CD4-positive, alpha-beta T cell (primary cell): ENCODE measurements at regions of chr16 and their contacts with region 1.

Region 1: DNA sequence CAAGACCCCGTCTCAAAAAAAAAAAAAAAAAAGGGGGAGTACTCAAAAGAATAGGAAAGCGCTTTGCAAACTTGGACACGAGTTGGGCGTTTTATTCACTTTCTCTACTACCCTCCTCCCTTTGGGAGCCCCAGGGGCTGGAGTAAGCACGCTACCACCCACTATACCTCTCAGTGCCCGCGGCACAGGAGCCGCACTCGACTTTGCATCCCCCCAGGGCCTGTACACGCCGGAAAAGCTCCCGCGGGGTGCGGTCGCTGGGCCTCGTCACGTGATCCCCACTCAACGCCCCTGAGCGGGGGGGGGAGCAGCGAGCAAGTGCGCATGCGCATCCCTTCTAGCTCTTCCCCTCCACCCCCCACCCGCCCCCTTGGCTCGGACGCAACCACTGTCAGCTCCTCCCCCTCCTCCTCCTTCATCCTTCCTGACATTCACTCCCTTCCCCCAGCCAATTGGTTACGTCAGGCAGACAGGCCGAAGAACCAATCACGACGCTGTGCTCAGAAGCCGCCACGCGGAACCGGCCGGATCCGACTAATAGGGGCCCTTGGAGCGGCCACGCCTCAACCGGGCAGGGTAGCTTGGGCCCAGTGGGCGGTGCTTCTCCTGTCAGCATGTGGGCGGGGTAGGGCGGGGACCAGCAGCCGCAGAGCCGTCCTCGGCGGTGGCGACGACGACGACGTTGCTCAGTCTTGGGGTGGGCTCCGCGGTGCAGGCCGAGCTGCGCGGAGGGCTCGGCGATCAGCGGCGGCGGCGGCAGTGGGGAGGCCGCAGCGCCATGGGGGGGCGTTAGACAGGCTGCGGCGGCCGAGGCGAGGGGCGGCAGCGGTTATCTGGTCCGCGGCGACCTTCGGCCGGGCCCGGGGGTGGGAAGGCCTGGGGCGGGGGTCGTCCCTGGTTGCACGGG is at the start of gene HAPSTR1:
- DNase-seq: peak; percentile 98 to 100 (median 99)
- ATAC-seq: peak; percentile 87
- H3K4me3 ChIP-seq: peak within 1 kb of the TSS; percentile 89
- H3K4me3 Mint-ChIP-seq: peak within 1 kb of the TSS; percentile 96
- H3K27ac ChIP-seq: peak within 1 kb of the TSS; percentile 86 to 90
- H3K27ac Mint-ChIP-seq: peak within 1 kb of the TSS; percentile 97
- H3K4me1 ChIP-seq: peaks cover 22% of the 10 kb centered on the region
- H3K4me1 Mint-ChIP-seq: peaks cover 47% of the 10 kb centered on the region
- H3K27me3 ChIP-seq: no peaks in the 10 kb centered on the region
- H3K27me3 Mint-ChIP-seq: no peaks in the 10 kb centered on the region
- CTCF ChIP-seq: no peak
- total RNA-seq, gene HAPSTR1: 152 to 153 TPM

Region 2: DNA sequence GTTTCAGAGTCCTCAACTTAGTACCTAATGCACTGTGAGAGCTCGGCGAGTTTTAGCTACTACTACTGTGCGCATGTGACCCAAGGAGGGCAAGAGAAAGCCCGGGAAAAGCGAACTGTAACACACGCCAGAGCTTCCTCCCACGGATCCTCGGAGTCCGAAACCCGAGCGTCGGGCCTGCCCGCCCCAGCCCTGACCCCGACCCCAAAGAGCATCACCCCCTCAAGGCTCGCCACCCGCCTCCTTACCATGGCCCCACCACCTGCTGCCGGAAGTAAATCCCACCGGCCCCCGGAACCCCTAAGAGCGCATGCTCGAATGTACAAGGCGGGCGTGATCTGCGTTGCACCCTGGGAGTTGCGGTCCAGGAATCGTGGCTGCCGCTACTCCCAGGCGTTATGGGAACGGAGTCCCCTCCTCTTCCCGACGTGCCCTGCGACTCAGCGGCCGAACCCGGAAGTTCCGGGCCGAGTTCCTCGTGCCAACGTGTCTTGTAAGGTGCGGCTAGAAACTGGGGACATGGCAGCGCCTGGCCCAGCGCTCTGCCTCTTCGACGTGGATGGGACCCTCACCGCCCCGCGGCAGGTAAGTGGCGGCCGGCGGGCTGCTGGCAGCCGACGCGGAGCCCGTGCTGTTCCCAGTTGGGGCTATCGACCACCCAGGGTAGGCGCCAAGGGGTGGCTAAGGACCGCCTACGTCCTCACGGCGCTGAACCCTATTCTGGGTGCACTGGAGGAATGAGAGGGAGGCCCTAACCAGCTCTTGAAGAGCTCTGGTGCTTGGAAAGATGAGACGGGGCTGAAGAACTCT is 293.6 kb before region 1 on chr16 and contains the starts of genes PMM2 and TMEM186:
- CTCF ChIA-PET with region 1: no interaction called
- POLR2A ChIA-PET with region 1: interaction called, 12 read pairs
- intact Hi-C with region 1: loop called (anchors 5 kb)
- DNase-seq: peak; percentile 87 to 98 (median 93)
- ATAC-seq: peak; percentile 96
- H3K4me3 ChIP-seq: peak within 1 kb of the TSS; percentile 98
- H3K4me3 Mint-ChIP-seq: peak within 1 kb of the TSS; percentile 98
- H3K27ac ChIP-seq: peak within 1 kb of the TSS; percentile 82 to 83
- H3K27ac Mint-ChIP-seq: peak within 1 kb of the TSS; percentile 89
- H3K4me1 ChIP-seq: peaks cover 39% of the 10 kb centered on the region
- H3K4me1 Mint-ChIP-seq: peaks cover 48% of the 10 kb centered on the region
- H3K27me3 ChIP-seq: no peaks in the 10 kb centered on the region
- H3K27me3 Mint-ChIP-seq: no peaks in the 10 kb centered on the region
- CTCF ChIP-seq: no peak
- total RNA-seq, gene PMM2: 24.2 to 27.0 TPM
- total RNA-seq, gene TMEM186: 1.9 to 3.1 TPM

Region 3: GRCh38 chr16:8963825-8964441 is 127.3 kb before region 1 on chr16 and contains the start of gene USP7:
- CTCF ChIA-PET with region 1: interaction called, 3 read pairs
- POLR2A ChIA-PET with region 1: interaction called, 41 read pairs
- intact Hi-C with region 1: loop called (anchors 1 to 5 kb)
- DNase-seq: peak; percentile 85 to 97 (median 91)
- ATAC-seq: peak; percentile 88
- H3K4me3 ChIP-seq: peak within 1 kb of the TSS; percentile 75
- H3K4me3 Mint-ChIP-seq: peak within 1 kb of the TSS; percentile 97
- H3K27ac ChIP-seq: peak within 1 kb of the TSS; percentile 64 to 81
- H3K27ac Mint-ChIP-seq: peak within 1 kb of the TSS; percentile 94
- H3K4me1 ChIP-seq: peaks cover 42% of the 10 kb centered on the region
- H3K4me1 Mint-ChIP-seq: peaks cover 47% of the 10 kb centered on the region
- H3K27me3 ChIP-seq: no peaks in the 10 kb centered on the region
- H3K27me3 Mint-ChIP-seq: no peaks in the 10 kb centered on the region
- CTCF ChIP-seq: no peak
- total RNA-seq, gene USP7: 259 to 268 TPM

Region 4: DNA sequence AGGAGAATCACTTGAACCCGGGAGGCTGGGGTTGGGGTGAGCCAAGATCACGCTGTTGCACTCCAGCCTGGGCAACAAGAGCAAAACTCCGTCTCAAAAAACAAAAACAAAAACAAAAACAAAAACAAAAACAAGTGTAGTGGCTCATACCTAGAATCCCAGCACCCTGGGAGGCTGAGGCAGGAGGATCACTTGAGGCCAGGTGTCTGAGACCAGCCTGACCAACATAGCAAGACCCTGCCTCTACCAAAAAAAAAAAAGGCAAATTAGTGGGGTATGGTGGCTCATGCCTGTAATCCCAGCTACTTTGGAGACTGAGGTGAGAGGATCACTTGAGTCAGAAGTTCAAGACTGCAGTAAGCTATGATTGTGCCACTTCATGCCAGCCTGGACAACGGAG is 26.1 kb before region 1 on chr16:
- CTCF ChIA-PET with region 1: no interaction called
- POLR2A ChIA-PET with region 1: no interaction called
- intact Hi-C with region 1: no loop called
- DNase-seq: no peak
- ATAC-seq: no peak
- H3K4me3 ChIP-seq: no peak overlapping the region
- H3K4me3 Mint-ChIP-seq: no peak overlapping the region
- H3K27ac ChIP-seq: no peak overlapping the region
- H3K27ac Mint-ChIP-seq: no peak overlapping the region
- H3K4me1 ChIP-seq: no peaks in the 10 kb centered on the region
- H3K4me1 Mint-ChIP-seq: no peaks in the 10 kb centered on the region
- H3K27me3 ChIP-seq: no peaks in the 10 kb centered on the region
- H3K27me3 Mint-ChIP-seq: no peaks in the 10 kb centered on the region
- CTCF ChIP-seq: no peak

Region 5: DNA sequence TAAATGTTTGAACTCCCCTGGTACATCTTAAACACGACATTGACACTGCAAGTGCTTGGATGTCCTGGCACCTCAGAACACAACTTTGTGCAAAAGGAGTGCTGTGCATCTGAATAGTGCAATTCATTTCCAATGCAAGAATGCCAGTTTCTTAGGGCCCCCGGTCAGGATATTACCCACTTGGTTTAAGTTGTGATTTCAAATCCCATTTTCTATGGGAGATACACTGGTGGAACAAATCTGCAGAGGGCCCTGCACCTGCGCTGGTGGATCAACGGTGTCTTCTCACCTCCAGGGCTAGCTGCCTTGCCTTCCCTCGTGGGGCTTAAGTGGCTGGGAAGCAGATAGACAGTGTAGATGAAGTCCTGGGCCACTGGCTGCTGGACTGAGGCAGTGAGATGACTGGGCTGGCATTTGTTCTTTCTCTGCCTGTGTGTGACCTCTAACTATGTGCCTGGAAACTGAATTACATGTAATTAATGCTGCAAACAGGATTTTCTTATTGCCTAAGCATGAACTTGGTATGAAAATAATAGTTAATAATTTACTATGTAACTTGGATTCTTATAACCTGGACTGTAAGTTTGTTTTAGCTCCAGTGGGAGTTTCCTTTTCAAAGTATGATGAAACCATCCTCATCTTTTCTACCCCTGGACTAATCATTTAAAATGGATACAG is 21.1 kb after region 1 on chr16:
- CTCF ChIA-PET with region 1: no interaction called
- POLR2A ChIA-PET with region 1: interaction called, 18 read pairs
- intact Hi-C with region 1: loop called in 1 of 2 experiments (anchors 2 kb)
- DNase-seq: no peak
- ATAC-seq: peak; percentile 9
- H3K4me3 ChIP-seq: no peak overlapping the region
- H3K4me3 Mint-ChIP-seq: peak overlapping the region; percentile 39
- H3K27ac ChIP-seq: peak overlapping the region in 1 of 2 donors; percentile 27
- H3K27ac Mint-ChIP-seq: peak overlapping the region; percentile 73
- H3K4me1 ChIP-seq: peaks cover 40% of the 10 kb centered on the region
- H3K4me1 Mint-ChIP-seq: peaks cover 88% of the 10 kb centered on the region
- H3K27me3 ChIP-seq: no peaks in the 10 kb centered on the region
- H3K27me3 Mint-ChIP-seq: no peaks in the 10 kb centered on the region
- CTCF ChIP-seq: no peak

Region 6: GRCh38 chr16:9134739-9135138 is 43.5 kb after region 1 on chr16:
- CTCF ChIA-PET with region 1: interaction called, 4 read pairs
- POLR2A ChIA-PET with region 1: interaction called, 14 read pairs
- intact Hi-C with region 1: loop called (anchors 5 kb)
- DNase-seq: peak; percentile 35 to 77 (median 52)
- ATAC-seq: peak; percentile 80
- H3K4me3 ChIP-seq: no peak overlapping the region
- H3K4me3 Mint-ChIP-seq: no peak overlapping the region
- H3K27ac ChIP-seq: no peak overlapping the region
- H3K27ac Mint-ChIP-seq: peak overlapping the region; percentile 47
- H3K4me1 ChIP-seq: peaks cover 22% of the 10 kb centered on the region
- H3K4me1 Mint-ChIP-seq: peaks cover 30% of the 10 kb centered on the region
- H3K27me3 ChIP-seq: peaks cover 3 to 4% of the 10 kb centered on the region in 2 experiments
- H3K27me3 Mint-ChIP-seq: no peaks in the 10 kb centered on the region
- CTCF ChIP-seq: peak; percentile 72

Region 7: DNA sequence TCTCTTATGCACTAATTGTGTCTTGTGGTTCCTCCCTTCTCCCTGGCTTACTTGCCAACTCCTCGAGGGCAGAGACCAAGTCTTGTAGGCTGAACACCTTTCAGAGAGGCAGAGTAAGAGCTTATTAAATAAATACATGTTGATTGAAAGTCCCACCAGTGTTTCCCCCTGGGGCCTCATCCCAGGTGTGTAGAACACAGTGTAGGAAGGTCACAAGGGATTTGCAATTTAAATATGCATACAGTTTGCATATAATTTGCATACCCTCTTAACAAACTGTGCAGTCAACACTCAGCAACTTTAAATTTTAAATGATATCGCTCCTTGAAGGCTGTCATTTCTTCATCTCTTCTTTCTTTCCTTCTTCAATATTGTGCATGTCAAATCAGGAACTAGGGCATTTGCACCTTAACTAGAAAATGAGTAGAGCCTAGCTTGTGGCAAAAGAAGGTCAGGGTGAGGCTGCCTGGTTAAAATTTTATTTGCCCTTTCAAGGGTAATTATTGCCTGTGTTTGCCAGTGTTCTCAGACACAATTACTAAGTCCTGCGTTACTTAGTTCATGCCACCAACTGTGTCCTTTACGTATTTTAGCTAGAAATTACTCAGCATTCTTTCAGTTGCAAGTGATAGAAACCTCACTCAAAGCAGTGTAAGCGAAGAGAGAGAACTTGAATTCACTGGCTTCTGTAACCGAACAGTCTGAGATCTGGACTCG is 465.9 kb after region 1 on chr16:
- CTCF ChIA-PET with region 1: no interaction called
- POLR2A ChIA-PET with region 1: no interaction called
- intact Hi-C with region 1: no loop called
- DNase-seq: no peak
- ATAC-seq: no peak
- H3K4me3 ChIP-seq: no peak overlapping the region
- H3K4me3 Mint-ChIP-seq: no peak overlapping the region
- H3K27ac ChIP-seq: no peak overlapping the region
- H3K27ac Mint-ChIP-seq: no peak overlapping the region
- H3K4me1 ChIP-seq: no peaks in the 10 kb centered on the region
- H3K4me1 Mint-ChIP-seq: no peaks in the 10 kb centered on the region
- H3K27me3 ChIP-seq: no peaks in the 10 kb centered on the region
- H3K27me3 Mint-ChIP-seq: no peaks in the 10 kb centered on the region
- CTCF ChIP-seq: no peak

Region 8: DNA sequence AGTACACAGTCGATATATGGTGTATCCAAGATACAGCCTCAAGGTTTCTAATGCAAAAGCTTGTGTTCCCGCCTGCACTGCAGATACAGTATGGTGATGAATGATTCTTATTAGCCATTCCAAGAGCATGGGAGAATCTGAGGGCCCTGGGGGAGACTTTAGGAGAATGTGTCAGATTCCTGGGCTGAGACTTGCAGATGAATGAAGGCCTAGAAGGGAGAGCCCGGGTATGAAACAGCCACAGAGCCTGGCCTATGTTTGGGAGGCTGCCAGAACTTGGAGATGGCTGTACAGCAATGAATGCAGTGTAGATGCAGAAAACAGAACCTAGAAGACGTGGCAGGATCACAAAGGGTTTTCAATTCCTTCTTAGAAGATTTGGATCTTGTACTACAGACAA is 511.0 kb after region 1 on chr16:
- CTCF ChIA-PET with region 1: no interaction called
- POLR2A ChIA-PET with region 1: no interaction called
- intact Hi-C with region 1: no loop called
- DNase-seq: no peak
- ATAC-seq: no peak
- H3K4me3 ChIP-seq: no peak overlapping the region
- H3K4me3 Mint-ChIP-seq: no peak overlapping the region
- H3K27ac ChIP-seq: no peak overlapping the region
- H3K27ac Mint-ChIP-seq: no peak overlapping the region
- H3K4me1 ChIP-seq: no peaks in the 10 kb centered on the region
- H3K4me1 Mint-ChIP-seq: no peaks in the 10 kb centered on the region
- H3K27me3 ChIP-seq: no peaks in the 10 kb centered on the region
- H3K27me3 Mint-ChIP-seq: no peaks in the 10 kb centered on the region
- CTCF ChIP-seq: no peak

Region 9: DNA sequence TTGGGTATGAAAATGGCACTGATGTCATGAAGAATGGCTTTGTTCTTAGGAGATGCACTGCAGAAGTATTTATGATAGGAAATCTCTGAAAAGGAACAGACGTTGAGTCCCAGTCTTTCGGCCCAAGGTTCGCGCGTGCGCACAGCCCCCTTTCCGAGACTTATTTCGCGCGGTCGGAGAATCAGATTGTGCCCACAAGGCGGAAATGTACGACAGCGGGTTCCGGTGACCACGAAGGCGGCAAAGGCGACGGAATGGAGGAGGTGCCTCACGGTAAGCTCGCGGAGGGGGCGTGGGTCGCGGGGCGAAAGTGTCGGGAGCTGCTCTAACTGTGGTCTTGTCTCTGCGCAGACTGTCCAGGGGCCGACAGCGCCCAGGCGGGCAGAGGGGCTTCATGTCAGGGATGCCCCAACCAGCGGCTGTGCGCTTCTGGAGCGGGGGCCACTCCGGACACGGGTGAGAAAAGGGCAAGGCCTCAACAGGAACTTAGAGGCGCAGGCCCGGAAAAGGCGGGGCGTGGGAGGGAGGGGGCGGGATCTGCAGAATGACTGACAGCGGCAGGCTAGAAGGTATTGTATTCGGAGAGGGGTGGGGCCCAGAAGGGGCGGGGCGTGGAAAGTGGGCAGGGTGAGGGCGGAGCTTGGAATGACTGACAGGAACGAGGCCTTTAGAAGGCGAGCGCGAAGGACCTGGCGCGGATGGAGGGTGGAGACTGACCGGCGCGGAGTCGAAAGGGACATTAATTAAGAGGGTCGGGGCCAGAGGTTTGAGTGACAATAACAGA is 1652.6 kb after region 1 on chr16 and contains the start of gene NUBP1:
- CTCF ChIA-PET with region 1: no interaction called
- POLR2A ChIA-PET with region 1: interaction called, 16 read pairs
- intact Hi-C with region 1: no loop called
- DNase-seq: peak; percentile 98 to 100 (median 99)
- ATAC-seq: peak; percentile 94
- H3K4me3 ChIP-seq: peak within 1 kb of the TSS; percentile 88
- H3K4me3 Mint-ChIP-seq: peak within 1 kb of the TSS; percentile 93
- H3K27ac ChIP-seq: peak within 1 kb of the TSS; percentile 95 to 99
- H3K27ac Mint-ChIP-seq: peak within 1 kb of the TSS; percentile 97
- H3K4me1 ChIP-seq: peaks cover 22% of the 10 kb centered on the region
- H3K4me1 Mint-ChIP-seq: peaks cover 29% of the 10 kb centered on the region
- H3K27me3 ChIP-seq: no peaks in the 10 kb centered on the region
- H3K27me3 Mint-ChIP-seq: no peaks in the 10 kb centered on the region
- CTCF ChIP-seq: no peak
- total RNA-seq, gene NUBP1: 19.3 to 20.1 TPM